ENCODE measurements at regions of chr12 and their contacts with region 1.

Region 1: GRCh38 chr12:94435511-94435927 is 24.1 kb downstream of the CEP83 start:
- DNase-seq: peak; percentile 25
- H3K4me3 ChIP-seq: no peak overlapping the region
- H3K27ac ChIP-seq: no peak overlapping the region
- H3K4me1 ChIP-seq: peaks cover 0 to 16% (median 3%) of the 10 kb centered on the region in 6 donors
- H3K27me3 ChIP-seq: no peaks in the 10 kb centered on the region
- CTCF ChIP-seq: no peak
- POLR2A ChIP-seq: no peak

Region 2: DNA sequence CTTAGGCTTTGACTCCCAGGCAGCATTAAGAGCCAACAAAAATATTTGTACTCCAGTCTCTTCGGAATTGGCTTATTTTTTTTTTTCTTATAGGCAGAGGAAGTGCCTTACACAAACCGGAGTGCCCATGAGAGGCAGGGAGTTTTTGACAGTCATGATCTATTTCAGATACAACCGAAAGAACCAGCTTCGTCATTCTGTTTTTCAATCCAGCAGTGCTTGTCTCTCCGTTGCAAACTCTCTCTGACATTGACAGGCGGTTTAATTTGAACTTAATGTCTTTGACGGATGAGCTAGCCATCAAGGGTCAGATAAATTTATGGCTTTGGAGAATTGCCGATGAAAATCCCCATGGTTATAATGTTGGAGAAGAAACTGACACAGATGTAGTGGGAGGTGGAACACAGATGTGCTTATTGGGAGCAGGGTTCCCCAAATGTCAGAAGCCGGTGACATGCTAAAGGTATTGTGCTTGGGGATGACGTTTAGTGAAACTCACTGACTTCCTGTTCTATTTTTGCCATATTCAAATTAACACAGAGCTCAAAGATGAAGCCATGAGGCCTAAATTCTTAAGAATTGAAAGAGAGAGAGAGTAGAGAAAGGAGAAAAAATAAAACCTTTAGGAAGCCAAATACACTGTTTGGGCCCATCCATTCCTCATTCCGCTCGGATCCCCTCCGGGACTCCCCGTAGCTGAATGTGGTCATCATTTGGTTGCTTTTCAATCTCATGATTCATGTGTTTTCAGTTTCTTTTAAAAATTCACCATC is 227.5 kb before region 1 on chr12:
- intact Hi-C with region 1: no loop called
- DNase-seq: no peak
- H3K4me3 ChIP-seq: peak overlapping the region in 4 of 8 donors; percentile 8 to 62 (median 14)
- H3K27ac ChIP-seq: peak overlapping the region; percentile 67 to 95 (median 92)
- H3K4me1 ChIP-seq: peaks cover 24 to 74% (median 60%) of the 10 kb centered on the region in 6 donors
- H3K27me3 ChIP-seq: no peaks in the 10 kb centered on the region
- CTCF ChIP-seq: peak in 1 of 11 experiments; percentile 9
- POLR2A ChIP-seq: peak in 2 of 3 donors; percentile 54 to 77

Region 3: GRCh38 chr12:94459728-94460615 is 24.5 kb after region 1 on chr12 and contains the start of gene CEP83:
- intact Hi-C with region 1: loop called (anchors 2 kb)
- DNase-seq: peak; percentile 100
- H3K4me3 ChIP-seq: peak within 1 kb of the TSS; percentile 41 to 81 (median 72)
- H3K27ac ChIP-seq: peak within 1 kb of the TSS; percentile 81 to 92 (median 90)
- H3K4me1 ChIP-seq: peaks cover 9 to 30% (median 23%) of the 10 kb centered on the region in 6 donors
- H3K27me3 ChIP-seq: no peaks in the 10 kb centered on the region
- CTCF ChIP-seq: peak in 2 of 11 experiments; percentile 15 to 28
- POLR2A ChIP-seq: peak in 1 of 3 donors; percentile 75
- total RNA-seq, gene CEP83: 13.0 to 29.0 (median 15.8) TPM